ENCODE measurements at regions of chr20 and their contacts with region 1.

Region 1: DNA sequence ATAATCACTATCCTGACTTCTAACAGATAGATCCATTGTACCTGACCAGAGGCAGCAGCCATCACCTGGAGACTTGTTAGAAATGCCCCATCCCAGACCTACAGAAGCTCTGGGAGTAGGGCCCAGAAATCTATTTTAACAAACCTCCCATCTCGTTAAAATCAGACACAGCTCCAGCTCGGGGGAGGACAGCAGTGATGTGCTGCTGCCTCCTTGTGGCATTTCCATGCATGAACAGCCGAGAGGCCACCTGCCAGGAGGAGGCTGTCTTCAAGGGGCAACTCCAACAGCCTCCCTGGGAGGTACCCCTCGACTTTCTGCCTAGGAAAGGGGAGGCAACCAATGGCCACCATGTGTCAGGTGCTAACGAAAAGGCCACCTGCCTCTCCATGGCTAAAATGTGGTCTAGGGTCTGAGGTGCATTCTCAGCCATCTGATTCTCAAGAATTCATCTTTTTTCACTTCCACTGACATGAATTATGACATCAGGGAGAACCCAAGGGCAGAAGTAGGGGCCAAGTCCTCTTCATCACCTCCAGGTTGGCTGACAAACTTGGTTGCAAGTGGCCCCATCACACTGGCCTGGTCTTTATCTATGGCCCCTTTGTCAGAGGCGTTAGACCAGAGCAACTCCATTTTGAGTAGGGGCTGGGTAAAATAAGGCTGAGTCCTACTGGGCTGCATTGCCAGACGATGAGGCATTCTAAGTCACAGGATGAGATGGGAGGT is 12.2 kb upstream of the KCNK15 start:
- DNase-seq: peak; percentile 82
- H3K4me3 Mint-ChIP-seq: no peak overlapping the region
- H3K27ac Mint-ChIP-seq: no peak overlapping the region
- H3K4me1 Mint-ChIP-seq: peaks cover 27% of the 10 kb centered on the region
- H3K27me3 Mint-ChIP-seq: no peaks in the 10 kb centered on the region

Region 2: DNA sequence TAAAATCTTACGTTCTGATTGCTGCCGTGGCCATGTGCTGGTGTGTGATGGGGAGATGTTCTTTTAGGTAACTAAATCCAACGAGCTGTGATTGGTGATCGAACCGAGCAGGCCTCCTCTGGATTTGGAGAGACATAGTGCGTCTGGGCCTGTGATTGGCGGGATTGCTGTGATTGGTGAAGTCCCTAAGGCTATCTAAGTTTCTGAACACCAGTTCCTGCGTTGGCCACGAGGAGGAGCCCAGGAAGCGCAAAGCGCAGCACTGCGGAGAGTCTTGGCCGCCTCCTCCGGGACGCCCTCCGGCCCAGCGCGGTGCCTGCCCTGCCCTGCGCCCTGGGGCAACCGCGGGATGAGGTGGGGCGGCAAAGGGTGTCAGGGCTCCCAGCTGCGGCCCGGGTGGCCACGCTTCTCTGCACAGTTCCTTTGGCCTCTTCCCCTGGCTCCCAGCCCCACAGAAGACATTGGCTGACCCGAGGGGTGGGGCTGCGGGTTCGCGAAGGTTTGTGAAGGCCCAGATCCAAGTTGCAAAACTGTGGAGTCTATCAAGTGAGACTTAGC is 345.0 kb before region 1 on chr20:
- CTCF ChIA-PET with region 1: no interaction called
- intact Hi-C with region 1: loop called (anchors 1 kb)
- DNase-seq: peak; percentile 90
- H3K4me3 Mint-ChIP-seq: peak overlapping the region; percentile 22
- H3K27ac Mint-ChIP-seq: no peak overlapping the region
- H3K4me1 Mint-ChIP-seq: peaks cover 11% of the 10 kb centered on the region
- H3K27me3 Mint-ChIP-seq: peaks cover 3% of the 10 kb centered on the region

Region 3: GRCh38 chr20:44495802-44496481 is 237.6 kb before region 1 on chr20:
- CTCF ChIA-PET with region 1: no interaction called
- intact Hi-C with region 1: loop called (anchors 10 kb)
- DNase-seq: peak; percentile 31
- H3K4me3 Mint-ChIP-seq: no peak overlapping the region
- H3K27ac Mint-ChIP-seq: peak overlapping the region; percentile 82
- H3K4me1 Mint-ChIP-seq: peaks cover 39% of the 10 kb centered on the region
- H3K27me3 Mint-ChIP-seq: no peaks in the 10 kb centered on the region

Region 4: DNA sequence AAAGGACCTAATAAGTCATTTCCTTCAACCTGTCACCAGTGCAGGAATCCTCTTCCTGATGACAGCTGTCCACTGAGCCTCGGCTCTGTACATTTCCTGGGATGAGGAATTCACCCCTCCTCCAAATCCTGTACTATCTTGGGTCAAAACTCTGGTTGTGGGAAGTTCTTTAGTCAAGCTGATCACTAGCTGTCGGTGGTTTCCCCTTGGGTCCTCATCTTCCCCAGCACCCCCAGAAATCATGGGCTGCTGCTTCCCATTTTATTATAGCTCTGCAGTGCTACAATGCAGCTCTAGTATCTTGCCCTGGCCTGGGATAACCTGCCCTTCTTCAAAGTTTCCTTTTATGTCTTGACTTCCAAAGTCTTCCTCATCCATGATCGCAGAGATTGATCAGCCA is 67.4 kb before region 1 on chr20:
- CTCF ChIA-PET with region 1: interaction called, 11 read pairs
- intact Hi-C with region 1: no loop called
- DNase-seq: no peak
- H3K4me3 Mint-ChIP-seq: no peak overlapping the region
- H3K27ac Mint-ChIP-seq: no peak overlapping the region
- H3K4me1 Mint-ChIP-seq: peaks cover 17% of the 10 kb centered on the region
- H3K27me3 Mint-ChIP-seq: no peaks in the 10 kb centered on the region

Region 5: DNA sequence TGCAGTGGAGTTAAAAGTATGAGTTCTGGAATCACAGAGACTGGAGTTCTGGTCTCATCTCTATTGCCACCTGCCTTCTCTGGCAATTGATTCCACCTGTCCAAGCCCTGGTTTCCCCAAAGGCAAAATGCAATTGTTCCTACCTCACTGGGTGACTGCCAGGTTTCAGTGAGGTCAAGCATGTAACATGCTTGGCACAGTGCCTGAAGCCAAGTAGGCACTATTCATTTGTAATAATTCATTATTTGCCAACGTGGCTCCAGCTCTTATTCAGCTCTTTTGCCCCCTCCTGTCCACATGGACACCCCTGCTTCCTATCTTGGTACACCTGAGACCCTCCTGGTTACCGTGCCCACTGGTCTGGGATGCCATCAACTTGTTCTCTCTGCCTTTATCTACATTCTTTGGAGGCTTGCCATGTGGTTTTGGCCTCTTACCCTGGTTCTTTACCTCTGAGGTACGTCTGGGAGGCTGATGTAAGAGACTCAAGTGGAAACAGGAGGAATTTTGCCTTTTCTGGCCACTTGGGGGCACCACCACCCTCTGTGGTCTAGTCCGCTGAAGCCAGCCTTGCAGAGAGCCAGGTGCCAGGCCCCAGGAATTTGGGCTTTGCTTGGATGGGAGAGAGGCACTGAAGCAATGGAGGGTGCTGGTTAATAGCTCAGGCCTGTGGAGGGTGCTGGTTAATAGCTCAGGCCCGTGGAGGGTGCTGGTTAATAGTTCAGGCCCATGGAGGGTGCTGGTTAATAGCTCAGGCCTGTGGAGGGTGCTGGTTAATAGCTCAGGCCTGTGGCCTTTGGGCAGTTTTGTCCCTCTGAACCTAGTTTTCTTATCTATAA is 13.9 kb after region 1 on chr20:
- CTCF ChIA-PET with region 1: interaction called, 15 read pairs
- intact Hi-C with region 1: no loop called
- DNase-seq: peak; percentile 89
- H3K4me3 Mint-ChIP-seq: peak overlapping the region; percentile 83
- H3K27ac Mint-ChIP-seq: peak overlapping the region; percentile 80
- H3K4me1 Mint-ChIP-seq: peaks cover 17% of the 10 kb centered on the region
- H3K27me3 Mint-ChIP-seq: peaks cover 11% of the 10 kb centered on the region

Region 6: GRCh38 chr20:44866703-44867335 is 133.3 kb after region 1 on chr20:
- CTCF ChIA-PET with region 1: interaction called, 3 read pairs
- intact Hi-C with region 1: loop called (anchors 1 kb)
- DNase-seq: no peak
- H3K4me3 Mint-ChIP-seq: peak overlapping the region; percentile 52
- H3K27ac Mint-ChIP-seq: no peak overlapping the region
- H3K4me1 Mint-ChIP-seq: peaks cover 9% of the 10 kb centered on the region
- H3K27me3 Mint-ChIP-seq: peaks cover 3% of the 10 kb centered on the region

Measured in activated naive CD4-positive, alpha-beta T cell treated with anti-CD3 and anti-CD28 coated beads for 36 hours (primary cell).